HAP-1 (cell line): ENCODE measurements at regions of chr4 and their contacts with region 1.

Region 1: GRCh38 chr4:167021545-167022155 is 212.6 kb downstream of the SPOCK3 start:
- DNase-seq: peak; percentile 49 to 81
- H3K4me3 ChIP-seq: no peak overlapping the region
- H3K4me1 ChIP-seq: no peaks in the 10 kb centered on the region
- H3K27me3 ChIP-seq: no peaks in the 10 kb centered on the region

Region 2: DNA sequence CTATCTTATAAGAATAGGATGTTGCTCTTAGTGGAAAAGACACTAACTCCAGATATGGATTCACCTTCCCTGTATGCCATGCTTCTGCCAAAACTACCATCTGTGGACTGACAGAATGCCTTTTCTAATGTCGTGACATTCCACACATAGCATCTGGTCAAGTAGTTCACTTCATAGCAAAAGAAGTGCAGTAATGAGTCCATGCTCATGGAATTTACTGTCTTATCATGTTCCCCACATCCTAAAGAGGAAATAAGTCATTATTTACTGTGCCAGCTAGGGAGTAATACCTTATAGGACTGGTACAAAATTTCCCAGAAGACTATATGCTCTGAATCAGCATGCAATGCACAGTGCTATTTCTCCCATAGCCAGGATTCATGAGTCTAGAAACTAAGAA is 586.2 kb before region 1 on chr4:
- in situ Hi-C with region 1: no loop called
- DNase-seq: no peak
- H3K4me3 ChIP-seq: no peak overlapping the region
- H3K4me1 ChIP-seq: no peaks in the 10 kb centered on the region
- H3K27me3 ChIP-seq: no peaks in the 10 kb centered on the region

Region 3: GRCh38 chr4:166957451-166957850 is 64.2 kb before region 1 on chr4:
- in situ Hi-C with region 1: no loop called
- DNase-seq: no peak
- H3K4me3 ChIP-seq: no peak overlapping the region
- H3K4me1 ChIP-seq: no peaks in the 10 kb centered on the region
- H3K27me3 ChIP-seq: no peaks in the 10 kb centered on the region

Region 4: GRCh38 chr4:167282171-167282864 is 260.7 kb after region 1 on chr4:
- in situ Hi-C with region 1: loop called (anchors 10 kb)
- DNase-seq: no peak
- H3K4me3 ChIP-seq: no peak overlapping the region
- H3K4me1 ChIP-seq: no peaks in the 10 kb centered on the region
- H3K27me3 ChIP-seq: no peaks in the 10 kb centered on the region